ENCODE measurements at regions of chr11 and their contacts with region 1.

Region 1: DNA sequence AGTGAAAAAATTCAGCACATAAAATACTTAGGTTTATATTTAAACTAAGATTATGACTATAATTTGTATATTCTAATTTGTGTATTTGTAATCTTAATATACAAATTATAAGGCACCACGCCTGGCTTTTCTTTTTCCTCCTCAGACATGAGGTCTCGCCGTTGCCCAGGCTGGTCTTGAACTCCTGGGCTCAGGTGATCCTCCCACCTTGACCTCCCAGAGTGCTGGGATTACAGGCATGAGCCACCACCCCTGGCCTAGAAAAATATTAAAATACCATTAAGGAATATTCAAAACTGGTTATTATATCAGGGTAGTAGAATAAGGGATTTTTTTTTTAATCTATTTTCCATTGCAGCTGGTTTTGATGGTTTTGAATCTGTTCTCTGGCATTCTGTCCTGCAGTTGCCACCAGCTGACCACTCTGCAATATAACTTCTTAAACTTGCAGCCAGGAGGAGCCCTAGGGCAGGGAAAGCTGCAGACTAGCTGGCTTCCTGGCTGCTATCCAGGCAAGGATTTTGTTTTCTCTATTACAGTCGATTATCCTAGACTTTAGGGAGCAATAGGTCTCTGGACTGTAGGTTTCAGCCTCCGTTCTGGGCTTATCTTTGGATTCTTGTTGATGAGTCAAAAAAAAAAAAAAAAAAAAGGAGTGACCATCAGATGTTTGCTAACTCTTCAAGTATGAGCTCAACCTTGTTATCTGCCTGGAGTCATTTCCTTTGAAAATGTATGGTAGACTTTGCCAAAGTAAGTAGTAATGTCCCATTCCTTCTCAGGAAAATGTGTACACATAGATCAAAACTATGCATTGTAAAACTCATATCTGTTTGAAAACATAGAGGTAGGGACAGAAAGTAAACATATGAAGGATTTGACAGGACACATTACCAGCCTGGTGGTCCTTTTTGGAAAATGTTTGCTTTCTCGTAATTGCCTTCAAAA is 13.2 kb downstream of the POLA2 start:
- DNase-seq: no peak
- H3K4me3 ChIP-seq: no peak overlapping the region
- H3K27ac ChIP-seq: peak overlapping the region; percentile 13
- H3K4me1 ChIP-seq: no peaks in the 10 kb centered on the region
- H3K27me3 ChIP-seq: no peaks in the 10 kb centered on the region
- CTCF ChIP-seq: peak; percentile 71 to 95 (median 77)
- POLR2A ChIP-seq: no peak

Region 2: DNA sequence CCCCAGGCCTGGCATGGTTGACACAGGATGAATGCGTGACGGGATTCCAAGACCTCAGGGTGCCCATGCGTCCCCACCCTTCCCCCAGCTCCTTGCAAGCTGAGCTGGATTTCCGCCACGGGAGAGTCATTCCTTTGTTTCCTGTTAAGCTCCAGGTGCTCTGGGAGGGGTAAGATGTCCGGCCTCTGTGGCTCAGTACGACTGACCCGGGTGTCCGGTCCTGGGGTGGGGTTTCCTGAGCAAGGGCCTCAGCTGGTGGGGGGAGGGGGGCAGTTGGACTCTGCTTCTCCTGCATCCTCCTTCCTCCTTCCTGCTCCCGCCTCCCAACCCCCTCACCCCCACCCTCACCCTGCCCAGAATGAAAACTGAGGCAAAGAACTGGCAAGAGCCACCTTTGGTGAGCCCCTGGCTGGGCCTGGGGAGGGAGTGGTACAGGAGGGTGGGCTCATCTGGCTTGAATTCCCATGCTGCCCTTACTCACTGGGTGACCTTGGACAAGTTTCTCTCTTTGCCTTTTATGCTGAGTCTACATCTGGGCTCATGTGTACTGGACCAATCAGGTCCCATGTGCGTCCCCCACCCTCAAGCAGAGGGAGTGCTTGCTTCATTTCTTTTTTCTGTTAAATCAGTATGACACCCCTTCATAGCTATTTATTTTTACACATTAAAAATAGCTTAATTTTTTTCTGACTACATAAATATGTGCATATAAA is 42.2 kb after region 1 on chr11:
- intact Hi-C with region 1: loop called (anchors 2 kb)
- DNase-seq: peak in 1 of 2 donors; percentile 91
- H3K4me3 ChIP-seq: peak overlapping the region; percentile 89 to 94
- H3K27ac ChIP-seq: peak overlapping the region; percentile 90
- H3K4me1 ChIP-seq: peaks cover 72% of the 10 kb centered on the region
- H3K27me3 ChIP-seq: no peaks in the 10 kb centered on the region
- CTCF ChIP-seq: no peak
- POLR2A ChIP-seq: no peak

Region 3: DNA sequence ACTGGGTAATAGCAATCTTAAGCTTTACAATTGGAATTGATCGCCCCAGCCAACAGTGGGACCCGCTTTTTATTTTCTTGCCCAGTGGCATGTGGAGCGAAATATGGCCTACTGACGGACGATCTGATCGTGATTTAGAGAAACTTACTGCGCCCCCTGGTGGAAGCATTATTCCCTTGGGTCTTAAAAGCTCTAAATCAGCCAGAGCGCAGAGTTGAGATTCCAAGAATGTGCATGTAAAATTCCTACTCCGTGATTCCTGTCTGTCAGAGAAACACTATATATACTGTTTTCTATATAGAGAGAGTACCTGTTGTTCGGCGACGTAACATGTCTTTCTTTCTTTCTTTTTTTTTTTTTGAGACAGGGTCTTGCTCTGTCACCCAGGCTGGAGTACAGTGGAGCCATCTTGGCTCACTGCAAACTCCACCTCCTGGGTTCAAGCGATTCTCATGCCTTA is 55.0 kb after region 1 on chr11:
- intact Hi-C with region 1: loop called (anchors 5 kb)
- DNase-seq: no peak
- H3K4me3 ChIP-seq: no peak overlapping the region
- H3K27ac ChIP-seq: no peak overlapping the region
- H3K4me1 ChIP-seq: peaks cover 15% of the 10 kb centered on the region
- H3K27me3 ChIP-seq: no peaks in the 10 kb centered on the region
- CTCF ChIP-seq: peak; percentile 47 to 81 (median 73)
- POLR2A ChIP-seq: no peak

Region 4: DNA sequence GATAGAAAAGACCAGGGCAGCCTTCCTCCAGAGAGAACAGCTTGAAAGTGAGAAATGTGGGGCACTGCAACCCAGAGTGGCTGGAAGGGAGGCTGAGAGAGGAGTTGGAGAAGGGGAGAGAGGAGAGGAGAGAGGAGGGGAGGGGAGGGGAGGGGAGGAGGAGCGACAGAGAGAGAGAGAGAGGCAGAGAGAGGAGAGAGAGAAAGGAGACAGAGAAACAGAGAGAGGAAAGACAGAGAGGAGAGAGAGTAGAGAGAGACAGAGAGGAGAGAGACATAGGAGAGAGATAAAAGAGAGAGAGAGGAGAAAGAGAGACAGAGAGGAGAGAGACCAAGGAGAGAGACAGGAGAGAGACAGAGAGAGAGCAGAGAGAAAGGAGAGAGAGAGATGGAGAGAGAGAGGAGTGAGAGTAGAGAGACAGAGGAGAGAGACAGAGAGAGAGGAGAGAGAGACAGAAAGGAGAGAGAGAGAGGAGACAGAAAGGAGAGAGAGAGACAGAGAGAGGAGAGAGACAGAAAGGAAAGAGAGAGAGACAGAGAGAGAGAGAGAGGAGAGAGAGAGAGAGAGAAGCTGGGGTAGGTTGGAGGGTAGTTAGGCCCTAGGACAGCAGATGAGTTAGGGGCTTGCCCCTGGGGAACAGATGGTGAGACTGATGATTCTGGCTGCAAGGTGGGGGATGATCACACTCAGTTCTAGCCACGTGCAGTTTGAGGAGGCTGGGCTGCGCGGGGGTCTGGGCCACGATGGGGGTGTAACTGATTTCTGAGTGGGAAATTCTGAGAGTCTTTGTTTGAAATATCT is 241.3 kb after region 1 on chr11:
- intact Hi-C with region 1: loop called (anchors 10 kb)
- DNase-seq: no peak
- H3K4me3 ChIP-seq: no peak overlapping the region
- H3K27ac ChIP-seq: no peak overlapping the region
- H3K4me1 ChIP-seq: no peaks in the 10 kb centered on the region
- H3K27me3 ChIP-seq: no peaks in the 10 kb centered on the region
- CTCF ChIP-seq: peak in 1 of 3 experiments; percentile 9
- POLR2A ChIP-seq: no peak

Region 5: GRCh38 chr11:65625628-65626342 is 350.8 kb after region 1 on chr11:
- intact Hi-C with region 1: no loop called
- DNase-seq: no peak
- H3K4me3 ChIP-seq: no peak overlapping the region
- H3K27ac ChIP-seq: no peak overlapping the region
- H3K4me1 ChIP-seq: no peaks in the 10 kb centered on the region
- H3K27me3 ChIP-seq: no peaks in the 10 kb centered on the region
- CTCF ChIP-seq: peak in 2 of 3 experiments; percentile 30 to 35
- POLR2A ChIP-seq: no peak

Measured in vagina (tissue), 2 donors.